Sciatic nerve (tissue), 2 donors: ENCODE measurements at regions of chr4 and their contacts with region 1.

Region 1: DNA sequence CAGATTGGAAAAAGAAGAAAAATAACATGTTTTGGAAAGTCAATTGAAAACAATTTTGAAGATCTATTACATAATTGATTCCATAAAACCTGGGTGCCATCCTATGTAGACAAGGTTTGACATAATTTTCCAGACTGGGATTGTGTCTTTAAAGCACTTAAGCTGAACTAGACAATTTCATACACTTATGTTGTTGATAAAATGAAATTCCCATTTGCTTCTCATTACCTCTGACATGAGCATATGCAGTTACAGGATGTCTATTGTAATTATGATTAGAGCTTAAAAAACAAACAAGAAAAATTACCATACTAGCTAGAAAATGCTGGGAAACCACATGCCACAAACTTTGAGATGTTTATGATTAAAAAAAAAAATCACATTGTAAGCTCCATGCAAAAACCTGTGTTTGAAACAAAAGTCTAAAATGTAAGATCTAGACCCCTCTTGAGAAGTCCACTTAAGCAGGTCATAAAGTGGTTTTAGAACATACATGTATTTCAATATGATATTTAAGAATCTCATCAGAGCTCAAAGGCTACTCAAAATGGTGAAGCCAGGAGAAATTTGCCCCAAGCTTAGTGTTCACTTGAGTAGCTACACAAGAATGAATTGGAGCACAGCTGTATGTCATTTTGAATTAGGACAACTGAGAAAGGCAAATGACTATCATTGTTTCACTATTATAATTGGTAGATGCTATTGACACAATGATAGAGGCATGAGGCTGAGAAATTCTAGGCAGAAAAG is 181.1 kb upstream of the PABPC4L start:
- DNase-seq: no peak
- ATAC-seq: no peak

Region 2: GRCh38 chr4:134422776-134423175 is 40.1 kb after region 1 on chr4:
- intact Hi-C with region 1: loop called (anchors 1 kb)
- DNase-seq: no peak
- ATAC-seq: no peak